Sigmoid colon (tissue), 7 donors: ENCODE measurements at regions of chr10 and their contacts with region 1.

Region 1: DNA sequence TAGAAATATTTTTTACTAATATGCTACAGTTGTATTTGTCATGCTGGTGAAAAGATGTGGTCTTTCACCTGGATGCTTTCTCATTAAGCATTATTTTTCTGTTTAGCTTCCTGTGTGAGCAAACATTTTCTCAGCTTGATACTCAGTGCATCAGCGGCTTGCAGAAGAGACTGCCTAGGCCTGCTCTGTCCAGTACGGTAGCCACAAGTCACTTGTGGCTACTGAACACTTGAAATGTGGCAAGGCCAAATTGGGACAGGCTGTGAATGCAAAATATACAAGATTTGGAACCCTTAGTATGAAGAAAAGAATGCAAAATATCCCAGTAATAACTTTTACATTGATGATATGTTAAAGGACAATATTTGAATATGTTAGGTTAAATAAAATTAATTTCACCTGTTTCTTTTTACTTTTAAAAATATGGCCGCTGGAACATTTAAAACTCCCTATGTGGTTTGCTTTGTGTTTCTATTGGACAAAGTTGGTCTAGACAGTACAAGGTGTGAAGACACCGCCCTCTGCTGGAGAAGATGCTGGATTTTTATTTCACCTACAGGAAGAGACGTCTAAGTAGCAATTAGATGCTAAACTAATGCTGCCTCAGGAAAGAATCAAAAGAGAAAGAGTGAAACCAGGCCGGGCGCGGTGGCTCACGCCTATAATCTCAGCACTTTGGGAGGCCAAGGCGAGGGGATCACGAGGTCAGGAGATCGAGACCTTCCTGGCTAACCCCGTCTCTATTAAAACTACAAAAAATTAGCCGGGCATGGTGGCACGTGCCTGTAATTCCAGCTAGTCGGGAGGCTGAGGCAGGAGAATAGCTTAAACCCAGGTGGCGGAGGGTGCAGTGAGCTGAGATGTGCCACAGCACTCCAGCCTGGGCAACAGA is 5.3 kb downstream of the SRGN start:
- DNase-seq: peak; percentile 81
- H3K4me3 ChIP-seq: no peak overlapping the region
- H3K27ac ChIP-seq: peak overlapping the region in 1 of 4 donors; percentile 16
- H3K4me1 ChIP-seq: no peaks in the 10 kb centered on the region
- H3K27me3 ChIP-seq: no peaks in the 10 kb centered on the region
- CTCF ChIP-seq: peak in 3 of 4 experiments; percentile 61 to 72 (median 71)
- EP300 ChIP-seq: no peak
- POLR2A ChIP-seq: no peak

Region 2: GRCh38 chr10:68988530-68989316 is 104.5 kb before region 1 on chr10 and contains the start of gene KIFBP:
- intact Hi-C with region 1: loop called (anchors 1 kb)
- DNase-seq: peak; percentile 97
- H3K4me3 ChIP-seq: peak within 1 kb of the TSS; percentile 80 to 97 (median 92)
- H3K27ac ChIP-seq: peak within 1 kb of the TSS; percentile 88 to 90 (median 88)
- H3K4me1 ChIP-seq: peaks cover 0 to 49% (median 46%) of the 10 kb centered on the region in 4 donors
- H3K27me3 ChIP-seq: no peaks in the 10 kb centered on the region
- CTCF ChIP-seq: no peak
- EP300 ChIP-seq: no peak
- POLR2A ChIP-seq: peak; percentile 79 to 91
- total RNA-seq, gene KIFBP: 21.0 to 34.6 (median 23.8) TPM

Region 3: GRCh38 chr10:69004821-69005220 is 88.4 kb before region 1 on chr10:
- intact Hi-C with region 1: loop called (anchors 5 kb)
- DNase-seq: no peak
- H3K4me3 ChIP-seq: no peak overlapping the region
- H3K27ac ChIP-seq: no peak overlapping the region
- H3K4me1 ChIP-seq: no peaks in the 10 kb centered on the region
- H3K27me3 ChIP-seq: no peaks in the 10 kb centered on the region
- CTCF ChIP-seq: peak in 1 of 4 experiments; percentile 36
- EP300 ChIP-seq: no peak
- POLR2A ChIP-seq: no peak

Region 4: DNA sequence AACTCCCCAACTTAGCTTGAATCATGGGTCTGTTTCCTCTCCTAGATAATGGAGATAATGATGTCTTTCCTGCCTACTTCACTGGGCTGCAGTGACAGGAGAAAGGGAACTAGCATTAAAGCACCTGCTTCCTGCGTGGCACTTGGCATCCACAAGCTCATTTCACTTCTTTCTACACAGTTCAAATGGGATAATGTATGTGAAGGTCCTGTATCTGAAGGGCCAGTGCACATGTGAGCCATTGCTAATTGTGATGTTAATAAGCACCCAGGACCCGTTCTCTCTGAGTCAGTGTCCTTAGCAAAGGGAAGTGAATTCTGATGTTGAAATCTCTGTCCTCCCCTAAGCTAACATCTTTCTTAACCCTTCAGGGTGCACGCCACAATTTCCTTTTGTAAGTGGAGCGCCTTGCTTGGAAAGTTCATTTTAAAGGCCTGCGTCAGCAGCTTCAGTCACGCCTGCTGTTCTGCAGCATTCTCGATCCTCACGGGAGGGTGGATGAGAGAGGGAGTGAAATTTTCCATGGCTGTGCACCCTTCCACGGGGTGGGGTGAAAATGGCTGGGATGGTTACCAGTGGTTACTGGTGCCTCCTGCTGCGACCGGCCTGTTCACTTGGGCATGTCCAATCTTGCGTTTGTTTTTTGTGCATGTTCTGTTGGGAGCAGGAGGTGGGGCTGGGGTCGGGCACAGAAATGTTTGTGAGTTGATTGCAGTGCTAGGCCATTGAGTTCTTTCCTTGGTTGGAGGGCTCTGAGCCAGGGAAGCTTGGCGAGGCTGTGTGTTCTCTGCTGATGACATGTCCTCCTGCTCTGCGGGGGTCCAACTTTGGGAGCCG is 244.3 kb after region 1 on chr10:
- intact Hi-C with region 1: no loop called
- DNase-seq: no peak
- H3K4me3 ChIP-seq: no peak overlapping the region
- H3K27ac ChIP-seq: peak overlapping the region; percentile 45 to 69 (median 62)
- H3K4me1 ChIP-seq: peaks cover 0 to 86% (median 69%) of the 10 kb centered on the region in 4 donors
- H3K27me3 ChIP-seq: no peaks in the 10 kb centered on the region
- CTCF ChIP-seq: no peak
- EP300 ChIP-seq: no peak
- POLR2A ChIP-seq: no peak